ENCODE measurements at regions of chr15 and their contacts with region 1.

Region 1: DNA sequence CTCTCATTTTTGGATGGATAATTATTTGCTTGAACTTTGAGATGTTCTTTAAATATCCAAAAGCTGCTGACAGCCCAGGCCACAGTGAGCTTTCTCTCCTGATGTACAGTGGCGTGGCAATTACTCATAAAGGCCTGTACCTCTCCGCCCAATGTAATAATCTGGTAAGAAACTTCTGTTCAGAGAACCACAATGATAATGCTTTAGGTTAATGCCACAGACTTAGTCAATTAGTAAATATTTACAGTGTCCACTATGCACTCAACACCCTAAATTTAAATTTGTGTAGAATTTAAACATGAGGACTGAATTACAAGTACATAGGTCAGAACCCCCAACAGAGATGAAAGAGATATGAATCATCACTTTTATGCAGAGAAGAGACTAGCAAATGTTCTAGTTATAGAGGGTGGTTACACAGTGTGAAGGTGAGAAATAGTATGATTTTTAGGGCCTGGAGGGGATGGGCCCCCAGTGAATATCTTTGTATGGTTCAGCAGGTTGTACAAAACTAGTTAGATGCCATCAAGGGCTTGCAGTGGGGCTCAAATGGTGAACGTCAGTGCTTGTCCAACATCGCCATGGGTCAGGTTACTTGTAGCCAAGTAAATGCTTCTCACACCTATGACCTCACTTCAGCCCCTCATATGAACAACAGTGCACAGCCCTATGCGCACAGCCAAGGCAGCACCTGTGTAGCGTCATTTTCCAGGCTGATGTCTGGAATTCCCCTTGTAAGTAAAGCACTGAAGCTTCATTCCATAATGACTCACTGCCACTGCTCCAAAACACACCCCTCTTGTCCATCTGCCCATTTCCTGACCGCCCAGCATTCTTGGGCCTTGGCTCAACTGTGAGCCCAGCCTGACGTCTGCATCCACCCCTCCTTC is 13.3 kb downstream of the ABHD2 start:
- DNase-seq: peak; percentile 28 to 57
- H3K4me3 ChIP-seq: no peak overlapping the region
- H3K4me3 Mint-ChIP-seq: no peak overlapping the region
- H3K27ac Mint-ChIP-seq: peak overlapping the region; percentile 4
- H3K4me1 ChIP-seq: peaks cover 23% of the 10 kb centered on the region
- H3K4me1 Mint-ChIP-seq: peaks cover 34% of the 10 kb centered on the region
- H3K27me3 ChIP-seq: no peaks in the 10 kb centered on the region
- H3K27me3 Mint-ChIP-seq: no peaks in the 10 kb centered on the region
- CTCF ChIP-seq: no peak

Region 2: GRCh38 chr15:89114997-89115396 is 13.4 kb after region 1 on chr15:
- CTCF ChIA-PET with region 1: no interaction called
- POLR2A ChIA-PET with region 1: no interaction called
- intact Hi-C with region 1: loop called (anchors 2 kb)
- DNase-seq: no peak
- H3K4me3 ChIP-seq: no peak overlapping the region
- H3K4me3 Mint-ChIP-seq: no peak overlapping the region
- H3K27ac Mint-ChIP-seq: peak overlapping the region; percentile 87
- H3K4me1 ChIP-seq: peaks cover 70% of the 10 kb centered on the region
- H3K4me1 Mint-ChIP-seq: peaks cover 41% of the 10 kb centered on the region
- H3K27me3 ChIP-seq: no peaks in the 10 kb centered on the region
- H3K27me3 Mint-ChIP-seq: no peaks in the 10 kb centered on the region
- CTCF ChIP-seq: no peak

Region 3: DNA sequence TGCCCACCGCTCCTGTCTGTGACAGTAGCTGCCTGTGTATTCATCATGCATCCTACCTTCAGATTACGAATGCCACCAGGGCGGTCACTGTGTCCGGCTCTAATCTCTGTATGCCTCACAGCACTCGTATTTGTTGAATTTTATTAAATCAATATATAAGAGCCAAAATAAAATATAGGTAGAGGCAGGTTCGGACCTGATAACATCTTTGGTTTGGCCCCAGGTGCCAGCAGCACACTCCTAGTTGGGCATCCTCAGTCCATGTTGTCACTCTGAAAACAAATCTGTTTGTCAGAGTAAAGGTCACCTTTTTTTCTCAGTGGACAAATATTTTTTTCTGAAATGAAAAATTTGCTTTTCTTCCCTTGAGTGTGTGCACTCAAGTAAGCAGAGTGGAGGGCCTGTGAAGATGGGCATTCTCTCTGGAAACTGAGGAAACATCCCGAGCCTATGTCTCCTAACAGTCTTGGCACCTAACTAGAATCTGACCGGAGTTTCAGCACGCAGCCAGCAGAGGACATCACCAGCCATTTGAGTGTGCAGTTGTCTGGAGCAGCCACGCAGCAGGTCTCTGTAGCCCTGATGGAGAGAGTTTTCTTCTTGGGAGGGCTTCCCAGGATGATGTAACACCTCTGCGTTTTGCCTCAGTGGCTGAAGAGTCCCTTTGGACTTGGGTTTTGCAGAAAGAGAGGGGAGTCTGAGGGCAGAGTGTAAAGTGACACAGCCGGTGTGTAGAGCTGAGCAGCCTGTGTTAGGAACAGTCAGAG is 38.0 kb after region 1 on chr15:
- CTCF ChIA-PET with region 1: interaction called, 3 read pairs
- POLR2A ChIA-PET with region 1: interaction called, 13 read pairs
- intact Hi-C with region 1: no loop called
- DNase-seq: peak in 1 of 2 experiments; percentile 44
- H3K4me3 ChIP-seq: no peak overlapping the region
- H3K4me3 Mint-ChIP-seq: peak overlapping the region; percentile 32
- H3K27ac Mint-ChIP-seq: peak overlapping the region; percentile 84
- H3K4me1 ChIP-seq: peaks cover 14% of the 10 kb centered on the region
- H3K4me1 Mint-ChIP-seq: peaks cover 26% of the 10 kb centered on the region
- H3K27me3 ChIP-seq: no peaks in the 10 kb centered on the region
- H3K27me3 Mint-ChIP-seq: no peaks in the 10 kb centered on the region
- CTCF ChIP-seq: peak; percentile 2 to 32

Measured in Caco-2 (cell line).